ENCODE measurements at regions of chr20 and their contacts with region 1.

Region 1: GRCh38 chr20:45293041-45294002 is 13.3 kb upstream of the RBPJL start:
- DNase-seq: peak; percentile 78
- H3K4me3 Mint-ChIP-seq: peak overlapping the region; percentile 69
- H3K27ac Mint-ChIP-seq: no peak overlapping the region
- H3K4me1 Mint-ChIP-seq: peaks cover 8% of the 10 kb centered on the region
- H3K27me3 Mint-ChIP-seq: peaks cover 27% of the 10 kb centered on the region

Region 2: GRCh38 chr20:45138561-45139300 is 154.6 kb before region 1 on chr20:
- intact Hi-C with region 1: loop called (anchors 5 kb)
- DNase-seq: peak; percentile 46
- H3K4me3 Mint-ChIP-seq: no peak overlapping the region
- H3K27ac Mint-ChIP-seq: no peak overlapping the region
- H3K4me1 Mint-ChIP-seq: no peaks in the 10 kb centered on the region
- H3K27me3 Mint-ChIP-seq: peaks cover 8% of the 10 kb centered on the region

Region 3: DNA sequence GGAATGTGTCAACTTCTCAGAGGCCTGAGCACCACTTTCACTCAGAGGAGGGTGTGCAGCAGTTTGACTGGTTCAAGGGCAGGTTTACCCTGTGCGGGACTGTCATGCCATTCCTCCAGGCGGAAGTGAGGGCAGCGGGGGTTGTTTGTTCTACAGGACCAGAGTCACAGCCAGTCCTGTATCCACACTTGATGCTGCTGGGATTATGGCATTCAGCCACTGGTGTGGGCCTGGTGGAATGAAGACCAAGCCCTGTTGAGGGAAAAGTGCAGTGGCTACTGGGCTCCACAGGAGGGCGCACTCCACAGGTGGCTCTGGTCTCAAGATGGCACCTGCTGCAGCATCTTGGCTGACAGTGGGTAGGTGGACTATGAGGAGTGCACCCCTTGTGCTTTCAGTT is 57.3 kb before region 1 on chr20:
- intact Hi-C with region 1: loop called (anchors 5 kb)
- DNase-seq: no peak
- H3K4me3 Mint-ChIP-seq: no peak overlapping the region
- H3K27ac Mint-ChIP-seq: no peak overlapping the region
- H3K4me1 Mint-ChIP-seq: no peaks in the 10 kb centered on the region
- H3K27me3 Mint-ChIP-seq: peaks cover 16% of the 10 kb centered on the region

Measured in activated T-helper 2 cell treated with anti-CD3 and anti-CD28 coated beads, Interferon-gamma antibody, Interleukin-2, Interleukin-4, amounts not matched to agents 10 μg/mL and 5 μg/mL and 100 μg/mL, durations not matched to agents 14 hours and 24 hours and 36 hours (primary cell).